Activated CD4-positive, alpha-beta T cell treated with anti-CD3 and anti-CD28 coated beads, Interleukin-2, amount 10 ng/mL, durations not matched to agents 24 days and 14 days (primary cell): ENCODE measurements at regions of chr1 and their contacts with region 1.

Region 1: GRCh38 chr1:111507411-111508201 is 4.2 kb upstream of the ADORA3 start:
- DNase-seq: peak; percentile 88
- H3K4me3 Mint-ChIP-seq: peak overlapping the region; percentile 79
- H3K27ac Mint-ChIP-seq: peak overlapping the region; percentile 94
- H3K4me1 Mint-ChIP-seq: peaks cover 66% of the 10 kb centered on the region
- H3K27me3 Mint-ChIP-seq: no peaks in the 10 kb centered on the region

Region 2: DNA sequence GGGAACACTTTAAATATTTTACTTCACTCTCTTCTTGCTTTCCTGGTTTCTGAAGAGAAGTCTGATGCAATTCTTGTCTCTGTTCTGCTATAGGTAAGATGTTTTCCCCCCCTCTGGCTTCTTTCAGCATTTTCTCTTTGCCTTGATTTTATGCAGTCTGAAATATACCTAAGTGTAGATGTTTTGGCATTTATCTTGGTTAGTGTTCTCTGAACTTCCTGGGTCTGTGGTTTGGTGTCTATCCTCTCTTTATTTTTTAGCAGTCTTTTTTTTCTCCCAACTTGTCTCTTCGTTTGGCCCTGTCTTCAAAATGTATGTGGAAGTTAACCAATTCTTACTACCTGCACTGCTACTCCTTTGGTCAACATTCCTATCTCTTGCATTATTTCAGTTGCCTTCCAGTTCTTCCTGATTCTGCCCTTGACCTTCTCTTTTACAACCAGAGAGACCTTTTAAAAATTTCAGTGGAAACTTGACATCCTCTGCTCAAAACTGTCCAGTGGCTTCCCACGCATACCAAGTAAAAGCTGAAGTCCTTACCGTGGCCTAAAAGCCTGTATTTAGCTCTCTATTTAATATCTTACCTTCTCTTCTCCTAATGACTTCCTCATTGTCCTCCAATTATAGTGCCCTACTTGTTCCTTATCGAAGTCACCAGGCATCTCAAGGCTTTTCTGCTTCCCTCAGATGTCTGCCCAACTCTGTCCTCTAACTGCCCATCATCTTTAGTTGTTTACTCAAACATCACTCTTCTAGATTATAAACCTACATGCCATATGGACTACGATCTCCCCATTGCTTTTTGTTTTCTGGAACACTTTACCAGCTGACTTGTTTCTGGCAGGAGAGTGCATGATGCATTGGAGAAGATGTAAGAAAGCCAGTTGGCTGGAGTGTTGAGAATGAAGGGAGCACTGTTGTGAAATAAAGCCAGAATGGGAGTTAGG is 152.9 kb after region 1 on chr1:
- intact Hi-C with region 1: loop called (anchors 2 kb)
- DNase-seq: peak; percentile 63
- H3K4me3 Mint-ChIP-seq: no peak overlapping the region
- H3K27ac Mint-ChIP-seq: no peak overlapping the region
- H3K4me1 Mint-ChIP-seq: peaks cover 44% of the 10 kb centered on the region
- H3K27me3 Mint-ChIP-seq: no peaks in the 10 kb centered on the region

Region 3: DNA sequence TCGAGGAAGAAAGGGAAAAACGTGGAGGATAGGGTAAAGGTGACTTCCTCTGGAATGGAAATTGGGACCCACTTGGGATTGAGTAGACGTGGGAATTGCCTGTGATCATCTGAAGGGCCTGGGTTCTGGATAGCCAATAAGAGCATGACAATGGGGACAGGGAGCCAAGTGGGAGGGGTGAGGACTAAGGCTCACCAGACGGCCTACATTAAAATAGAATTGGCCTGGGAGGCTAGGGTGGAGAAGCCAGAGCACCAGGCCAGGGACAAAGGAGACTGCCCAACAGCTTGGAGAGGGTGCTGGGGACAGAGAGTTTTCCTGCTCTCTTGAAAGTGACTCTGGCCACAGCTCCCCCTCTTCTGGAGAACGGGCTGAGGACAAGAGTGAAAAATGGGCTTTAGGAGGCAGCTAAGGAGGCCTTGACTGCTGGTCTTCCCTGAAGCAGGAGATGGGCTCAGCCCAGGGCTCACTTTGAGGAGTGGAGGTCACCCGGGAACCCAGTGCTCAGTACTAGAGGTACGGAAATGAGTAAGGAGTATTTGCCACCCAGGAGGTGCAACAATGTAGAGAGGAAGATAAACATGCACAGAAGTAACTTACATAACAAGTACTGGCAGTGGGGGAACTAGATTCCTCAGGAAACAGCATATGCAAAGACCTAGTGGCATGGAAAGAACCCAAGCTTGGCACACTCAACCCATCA is 212.8 kb after region 1 on chr1:
- intact Hi-C with region 1: loop called (anchors 2 kb)
- DNase-seq: peak; percentile 59
- H3K4me3 Mint-ChIP-seq: no peak overlapping the region
- H3K27ac Mint-ChIP-seq: peak overlapping the region; percentile 4
- H3K4me1 Mint-ChIP-seq: peaks cover 15% of the 10 kb centered on the region
- H3K27me3 Mint-ChIP-seq: no peaks in the 10 kb centered on the region

Region 4: DNA sequence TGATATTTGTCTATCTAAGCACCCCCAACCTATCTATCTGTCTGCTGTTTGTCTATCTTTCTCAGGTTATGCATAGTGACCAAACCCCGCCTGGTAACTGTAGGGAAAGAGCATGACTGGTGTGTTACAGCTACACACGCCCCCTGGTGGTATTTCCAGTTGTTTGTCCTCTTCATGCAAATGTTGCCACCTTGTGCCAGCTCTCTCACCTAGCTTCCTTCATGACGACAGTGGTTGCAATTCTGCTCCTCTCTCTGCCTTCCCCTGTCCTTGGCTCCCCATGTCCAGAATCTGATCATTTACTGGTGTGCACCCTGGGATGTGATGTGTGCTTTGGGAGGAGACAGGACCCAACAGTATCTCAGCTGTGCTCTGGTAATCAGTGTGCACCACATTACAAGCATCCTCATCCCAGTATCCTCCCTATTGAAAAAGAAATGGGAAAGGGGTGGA is 239.7 kb after region 1 on chr1:
- intact Hi-C with region 1: loop called (anchors 1 kb)
- DNase-seq: peak; percentile 93
- H3K4me3 Mint-ChIP-seq: no peak overlapping the region
- H3K27ac Mint-ChIP-seq: no peak overlapping the region
- H3K4me1 Mint-ChIP-seq: peaks cover 18% of the 10 kb centered on the region
- H3K27me3 Mint-ChIP-seq: peaks cover 23% of the 10 kb centered on the region